Mammary epithelial cell (primary cell): ENCODE measurements at regions of chr7 and their contacts with region 1.

Region 1: DNA sequence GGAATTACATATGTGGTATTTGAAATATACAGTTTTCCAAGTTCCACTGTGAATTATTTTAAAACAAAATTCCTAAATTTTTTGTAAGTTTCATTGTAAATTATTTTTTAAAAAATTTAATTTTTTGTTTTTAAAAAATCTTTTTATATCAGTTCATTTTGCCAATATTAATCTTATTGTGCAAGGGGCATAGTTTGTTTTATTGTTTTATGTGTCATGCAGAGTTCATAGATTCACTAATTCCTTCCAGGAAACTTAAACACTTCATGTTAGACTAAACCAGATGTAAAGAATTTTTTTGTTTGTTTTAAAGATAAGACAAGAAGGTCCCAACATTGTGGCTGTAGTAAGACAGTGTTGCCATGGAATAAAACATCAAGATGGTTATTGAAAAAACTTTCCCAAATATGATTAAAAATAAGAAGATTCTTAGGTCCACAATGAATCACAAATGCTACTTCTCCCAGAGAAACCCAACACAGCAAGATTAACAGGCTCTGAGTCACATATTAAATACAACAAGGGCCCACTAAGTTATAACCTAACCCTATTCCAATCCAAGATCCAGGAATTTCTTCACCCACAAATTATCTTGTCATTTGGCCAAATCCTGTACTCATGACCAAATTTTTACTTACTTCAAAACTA is 464.7 kb upstream of the IGFBP3 start:
- DNase-seq: peak; percentile 82
- H3K4me3 ChIP-seq: no peak overlapping the region
- H3K27ac ChIP-seq: peak overlapping the region; percentile 59
- H3K4me1 ChIP-seq: peaks cover 12% of the 10 kb centered on the region
- H3K27me3 ChIP-seq: no peaks in the 10 kb centered on the region
- CTCF ChIP-seq: no peak

Region 2: DNA sequence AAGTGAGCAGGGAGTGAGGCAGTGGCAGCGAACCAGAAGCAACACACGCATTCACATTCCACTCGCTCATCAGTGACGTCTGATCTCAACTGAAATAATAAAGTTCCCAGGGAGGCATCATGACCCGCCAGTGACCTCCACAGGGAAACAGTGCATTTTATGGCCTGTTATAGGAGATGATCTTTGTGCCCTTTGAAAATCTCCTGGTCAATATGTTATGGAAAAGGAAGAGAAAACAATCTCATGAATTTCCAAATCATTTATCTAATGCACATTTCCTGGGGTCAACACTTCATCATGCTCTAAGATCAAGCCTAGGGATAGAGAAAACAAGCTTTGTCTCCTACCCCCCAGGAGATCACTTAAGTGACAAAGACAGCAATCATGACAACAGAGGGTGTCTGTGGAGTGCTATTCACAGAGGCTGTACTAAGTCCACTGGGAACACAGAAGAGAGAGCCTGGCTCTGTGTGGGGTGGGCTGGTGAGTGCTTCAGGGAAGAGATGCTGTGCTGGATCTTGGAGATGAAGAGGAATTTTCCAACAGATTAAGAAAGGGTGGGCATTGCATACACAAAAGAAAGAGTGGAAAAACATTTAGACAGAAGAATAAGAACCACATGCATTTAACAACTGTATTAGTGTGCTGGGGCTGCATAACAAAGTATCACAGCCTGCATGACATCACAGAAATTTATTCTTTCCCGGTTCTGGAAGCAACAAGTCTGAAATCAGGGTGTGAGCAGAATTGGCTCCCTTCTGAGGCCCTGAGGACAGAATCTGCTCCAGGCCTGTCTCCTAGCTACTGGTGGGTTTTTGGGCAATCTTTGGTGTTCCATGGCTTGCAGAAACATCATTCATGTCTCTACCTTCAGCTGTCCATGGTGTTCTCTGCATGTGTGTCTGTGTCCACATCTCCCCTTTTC is 149.1 kb after region 1 on chr7:
- CTCF ChIA-PET with region 1: no interaction called
- dilution Hi-C with region 1: loop called (anchors 5 kb)
- in situ Hi-C with region 1: no loop called
- intact Hi-C with region 1: loop called (anchors 10 kb)
- DNase-seq: no peak
- H3K4me3 ChIP-seq: no peak overlapping the region
- H3K27ac ChIP-seq: no peak overlapping the region
- H3K4me1 ChIP-seq: peaks cover 4% of the 10 kb centered on the region
- H3K27me3 ChIP-seq: no peaks in the 10 kb centered on the region
- CTCF ChIP-seq: no peak

Region 3: DNA sequence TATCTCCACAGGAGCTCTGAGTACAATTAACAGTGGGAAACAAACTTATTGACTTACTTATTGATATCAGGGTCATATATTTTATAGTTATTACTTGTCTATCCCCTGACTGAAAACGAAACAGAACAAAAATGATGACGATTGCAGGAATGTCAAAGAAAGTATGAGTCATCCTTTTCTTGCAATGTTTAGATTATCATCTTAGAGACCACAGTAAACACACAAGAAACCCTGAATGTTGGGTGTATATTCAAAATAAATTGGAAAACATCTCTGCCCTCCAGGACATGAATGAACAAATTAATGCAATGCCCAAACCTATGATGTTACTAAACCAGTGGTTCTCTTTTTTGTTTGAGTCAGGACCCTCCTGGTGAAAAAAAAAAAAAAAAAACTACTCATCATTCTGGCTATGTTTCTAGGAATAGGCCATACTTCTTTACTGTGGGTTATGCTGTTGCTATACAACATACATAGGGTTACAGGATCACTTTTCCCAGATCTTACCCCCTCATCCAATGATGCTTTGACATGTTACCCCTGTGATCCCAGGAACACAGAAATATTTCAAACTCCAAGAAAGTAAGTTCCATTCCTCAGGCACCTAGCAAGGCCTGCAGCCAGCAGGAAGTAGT is 158.7 kb after region 1 on chr7:
- CTCF ChIA-PET with region 1: no interaction called
- dilution Hi-C with region 1: no loop called
- in situ Hi-C with region 1: no loop called
- intact Hi-C with region 1: loop called (anchors 10 kb)
- DNase-seq: peak; percentile 84
- H3K4me3 ChIP-seq: no peak overlapping the region
- H3K27ac ChIP-seq: peak overlapping the region; percentile 95
- H3K4me1 ChIP-seq: peaks cover 22% of the 10 kb centered on the region
- H3K27me3 ChIP-seq: no peaks in the 10 kb centered on the region
- CTCF ChIP-seq: no peak